ENCODE measurements at regions of chr15 and their contacts with region 1.

Region 1: DNA sequence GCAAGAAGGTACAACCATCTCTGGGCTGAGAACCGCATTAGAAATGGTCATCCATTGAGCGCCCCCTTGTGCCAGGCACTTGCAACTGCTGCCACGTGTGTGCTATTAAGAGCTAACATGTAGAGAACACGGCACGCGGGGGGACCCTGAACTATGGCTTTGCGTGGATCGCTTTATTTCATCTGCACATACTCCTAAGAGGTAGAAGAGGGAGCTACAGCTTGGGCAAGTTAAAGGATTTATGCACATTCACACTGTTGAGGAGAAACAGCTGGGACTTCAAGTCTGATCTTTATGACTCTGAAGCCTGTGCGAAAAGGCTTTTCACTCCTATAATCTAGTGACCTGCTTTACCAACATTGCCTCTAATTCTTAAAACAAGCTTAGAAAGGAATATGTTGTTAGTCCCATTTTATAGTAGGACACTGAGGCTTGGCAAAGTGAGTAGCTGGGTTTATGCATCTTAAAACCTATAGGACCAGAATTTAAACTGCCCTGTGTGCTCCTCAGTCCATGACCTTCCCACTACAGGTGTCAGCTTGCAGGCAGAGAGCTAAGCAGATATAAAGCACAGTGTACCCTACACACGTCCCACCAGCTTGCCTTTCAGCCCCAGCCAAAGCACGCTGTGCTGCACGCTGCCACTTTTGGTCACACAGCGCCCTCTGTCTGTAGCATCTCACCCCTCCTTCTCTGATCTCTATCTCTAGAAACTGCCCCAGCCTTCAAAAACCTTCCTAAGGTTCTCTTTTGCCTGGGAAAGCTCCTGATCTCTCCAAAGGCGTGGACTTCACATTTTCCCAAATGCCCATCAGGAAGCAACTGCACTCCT is 57.8 kb downstream of the STARD5 start:
- DNase-seq: peak; percentile 90
- ATAC-seq: peak; percentile 93
- H3K4me3 Mint-ChIP-seq: peak overlapping the region; percentile 58
- H3K27ac Mint-ChIP-seq: no peak overlapping the region
- H3K4me1 Mint-ChIP-seq: peaks cover 13% of the 10 kb centered on the region
- H3K27me3 Mint-ChIP-seq: no peaks in the 10 kb centered on the region
- CTCF ChIP-seq: peak; percentile 78

Region 2: GRCh38 chr15:81007428-81008064 is 258.6 kb before region 1 on chr15:
- CTCF ChIA-PET with region 1: interaction called, 37 read pairs
- POLR2A ChIA-PET with region 1: no interaction called
- DNase-seq: no peak
- ATAC-seq: no peak
- H3K4me3 Mint-ChIP-seq: no peak overlapping the region
- H3K27ac Mint-ChIP-seq: no peak overlapping the region
- H3K4me1 Mint-ChIP-seq: peaks cover 3% of the 10 kb centered on the region; the same call in 1 of the 2 replicates
- H3K27me3 Mint-ChIP-seq: no peaks in the 10 kb centered on the region; the same call in 1 of the 2 replicates
- CTCF ChIP-seq: no peak

Region 3: GRCh38 chr15:81155375-81156218 is 110.6 kb before region 1 on chr15:
- CTCF ChIA-PET with region 1: interaction called, 170 read pairs
- POLR2A ChIA-PET with region 1: no interaction called
- DNase-seq: no peak
- ATAC-seq: peak; percentile 60
- H3K4me3 Mint-ChIP-seq: no peak overlapping the region
- H3K27ac Mint-ChIP-seq: no peak overlapping the region
- H3K4me1 Mint-ChIP-seq: no peaks in the 10 kb centered on the region
- H3K27me3 Mint-ChIP-seq: no peaks in the 10 kb centered on the region
- CTCF ChIP-seq: no peak; the same call in 1 of the 2 replicates

Region 4: GRCh38 chr15:81195339-81195864 is 70.8 kb before region 1 on chr15:
- CTCF ChIA-PET with region 1: interaction called, 25 read pairs
- POLR2A ChIA-PET with region 1: no interaction called
- DNase-seq: no peak
- ATAC-seq: no peak
- H3K4me3 Mint-ChIP-seq: no peak overlapping the region
- H3K27ac Mint-ChIP-seq: no peak overlapping the region
- H3K4me1 Mint-ChIP-seq: peaks cover 6% of the 10 kb centered on the region
- H3K27me3 Mint-ChIP-seq: no peaks in the 10 kb centered on the region
- CTCF ChIP-seq: no peak

Region 5: DNA sequence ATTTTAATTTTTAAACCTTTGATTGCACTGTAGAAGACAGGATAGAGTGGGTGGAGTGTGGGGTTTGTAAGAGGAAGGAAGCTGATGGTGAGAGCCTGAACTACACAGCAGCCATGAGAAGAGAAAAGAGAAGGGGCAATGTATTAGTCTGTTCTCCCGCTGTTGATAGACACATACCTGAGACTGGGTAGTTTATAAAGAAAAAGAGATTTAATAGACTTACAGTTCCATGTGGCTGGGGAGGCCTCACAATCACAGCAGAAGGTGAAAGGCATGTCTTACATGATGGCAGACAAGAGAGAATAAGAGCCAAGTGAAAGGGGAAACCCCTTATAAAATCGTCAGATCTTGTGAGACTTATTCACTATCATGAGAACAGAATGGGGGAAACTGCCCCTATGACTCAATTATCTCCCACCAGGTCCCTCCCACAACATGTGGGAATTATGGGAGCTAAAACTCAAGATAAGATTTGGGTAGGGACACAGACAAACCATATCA is 20.5 kb after region 1 on chr15:
- CTCF ChIA-PET with region 1: interaction called, 23 read pairs
- POLR2A ChIA-PET with region 1: no interaction called
- DNase-seq: no peak
- ATAC-seq: no peak
- H3K4me3 Mint-ChIP-seq: no peak overlapping the region
- H3K27ac Mint-ChIP-seq: no peak overlapping the region
- H3K4me1 Mint-ChIP-seq: no peaks in the 10 kb centered on the region
- H3K27me3 Mint-ChIP-seq: no peaks in the 10 kb centered on the region
- CTCF ChIP-seq: no peak

Region 6: GRCh38 chr15:81386947-81387346 is 120.8 kb after region 1 on chr15:
- CTCF ChIA-PET with region 1: interaction called, 21 read pairs
- POLR2A ChIA-PET with region 1: no interaction called
- DNase-seq: no peak
- ATAC-seq: no peak
- H3K4me3 Mint-ChIP-seq: no peak overlapping the region
- H3K27ac Mint-ChIP-seq: no peak overlapping the region
- H3K4me1 Mint-ChIP-seq: peaks cover 6% of the 10 kb centered on the region
- H3K27me3 Mint-ChIP-seq: no peaks in the 10 kb centered on the region
- CTCF ChIP-seq: no peak

Region 7: DNA sequence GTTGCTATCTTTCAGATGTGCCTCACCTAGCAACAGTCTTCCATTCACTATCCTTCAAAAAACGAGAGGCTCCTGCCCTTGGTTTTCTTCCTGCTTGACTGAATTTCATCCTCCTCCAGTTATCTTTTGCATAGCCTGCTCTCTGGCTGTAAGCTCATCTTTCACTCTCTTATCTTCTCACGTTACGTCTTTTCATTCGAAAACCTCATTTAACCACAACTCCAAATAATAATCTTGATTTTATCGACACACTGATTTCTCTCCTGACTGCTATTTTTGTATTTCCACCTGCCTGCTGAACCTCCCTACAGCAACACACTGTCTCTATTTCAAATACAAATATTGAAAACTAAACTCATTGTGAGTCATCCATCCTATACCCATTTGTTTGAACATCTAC is 338.6 kb after region 1 on chr15:
- CTCF ChIA-PET with region 1: no interaction called
- POLR2A ChIA-PET with region 1: no interaction called
- DNase-seq: no peak
- ATAC-seq: no peak
- H3K4me3 Mint-ChIP-seq: no peak overlapping the region
- H3K27ac Mint-ChIP-seq: no peak overlapping the region
- H3K4me1 Mint-ChIP-seq: peaks cover 16% of the 10 kb centered on the region
- H3K27me3 Mint-ChIP-seq: peaks cover 3% of the 10 kb centered on the region; the same call in 1 of the 2 replicates
- CTCF ChIP-seq: no peak

Measured in WTC11 (cell line).